PC-9 (cell line): ENCODE measurements at regions of chr5 and their contacts with region 1.

Region 1: DNA sequence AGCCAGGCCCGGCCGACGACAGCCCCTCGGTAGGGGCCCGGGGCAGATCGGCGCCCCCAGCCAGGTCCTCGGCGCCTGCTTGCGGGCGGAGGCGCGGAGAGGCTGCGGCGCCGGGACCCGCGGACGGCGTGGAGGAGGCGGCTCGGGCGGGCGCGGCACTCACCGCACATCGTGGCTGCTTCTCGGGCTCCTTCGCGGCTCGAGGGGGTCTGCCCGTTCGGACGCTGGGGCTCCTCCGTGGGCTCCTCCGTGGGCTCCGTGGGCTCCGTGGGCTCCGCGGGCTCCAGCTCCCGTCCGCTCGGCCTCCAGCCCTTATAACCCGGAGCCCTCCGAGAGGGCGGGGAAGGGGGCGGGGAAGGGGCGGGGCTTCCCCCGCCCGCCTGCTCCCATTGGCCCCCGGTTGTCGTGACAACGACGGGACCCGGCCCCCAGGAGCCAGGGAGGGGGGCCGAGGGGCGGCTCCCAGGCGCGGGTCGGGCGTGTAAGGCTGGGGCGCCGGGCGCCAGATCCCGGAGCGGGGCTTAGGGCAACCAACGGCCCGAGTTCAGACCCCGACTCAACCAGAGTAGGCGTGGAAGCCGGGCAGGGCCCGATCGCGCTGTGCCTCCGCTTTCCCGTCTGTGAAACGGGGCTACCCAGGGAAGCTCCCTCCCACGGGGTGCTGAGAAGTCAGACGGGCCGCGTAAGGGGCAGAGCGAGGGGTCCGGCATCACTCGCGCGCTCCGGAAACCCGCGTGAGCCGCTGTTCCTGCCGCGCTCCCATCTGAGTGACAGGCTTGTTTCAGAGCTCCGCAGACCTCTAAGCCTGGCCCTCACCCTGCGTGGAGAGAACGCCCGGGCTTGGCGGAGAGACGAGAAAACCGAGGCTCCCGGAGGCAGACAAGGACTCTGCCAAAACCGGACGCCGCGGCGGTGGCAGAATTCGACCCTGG is at the start of gene GFPT2:
- DNase-seq: peak; percentile 58 to 86
- H3K4me3 ChIP-seq: peak within 1 kb of the TSS; percentile 88
- H3K27ac ChIP-seq: no peak within 1 kb of the TSS
- H3K4me1 ChIP-seq: no peaks in the 10 kb centered on the region; the same call in 1 of the 2 replicates
- H3K27me3 ChIP-seq: no peaks in the 10 kb centered on the region
- CTCF ChIP-seq: no peak
- total RNA-seq, gene GFPT2: 22.5 and 24.4 TPM in 2 replicates

Region 2: GRCh38 chr5:180315762-180316212 is 37.5 kb before region 1 on chr5:
- CTCF ChIA-PET with region 1: interaction called, 5 read pairs
- POLR2A ChIA-PET with region 1: no interaction called
- intact Hi-C with region 1: loop called (anchors 2 kb)
- DNase-seq: peak; percentile 43 to 73
- H3K4me3 ChIP-seq: no peak overlapping the region
- H3K27ac ChIP-seq: no peak overlapping the region
- H3K4me1 ChIP-seq: no peaks in the 10 kb centered on the region
- H3K27me3 ChIP-seq: no peaks in the 10 kb centered on the region
- CTCF ChIP-seq: peak; percentile 98

Region 3: DNA sequence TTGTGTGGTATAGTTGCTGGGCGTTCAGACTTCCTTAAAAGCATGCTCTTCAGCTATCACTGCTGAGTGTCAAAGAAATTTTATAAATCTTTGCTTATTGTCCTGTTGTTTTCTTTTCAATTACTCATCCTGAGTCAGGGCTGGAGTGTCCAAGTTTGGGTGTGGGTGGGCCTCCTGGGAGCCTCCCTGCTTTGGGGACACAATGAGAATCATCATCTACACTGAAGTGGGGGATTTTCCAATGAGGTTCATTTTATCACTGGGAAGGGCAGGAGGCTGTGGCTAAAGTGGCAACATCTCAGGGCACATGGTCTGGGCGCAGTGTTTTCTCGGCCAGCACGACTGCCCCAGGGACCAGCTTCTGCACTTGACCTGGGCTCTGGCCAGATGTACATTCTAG is 19.7 kb before region 1 on chr5:
- CTCF ChIA-PET with region 1: interaction called, 5 read pairs
- POLR2A ChIA-PET with region 1: interaction called, 6 read pairs
- intact Hi-C with region 1: loop called (anchors 1 kb)
- DNase-seq: peak; percentile 70 to 84
- H3K4me3 ChIP-seq: no peak overlapping the region
- H3K27ac ChIP-seq: peak overlapping the region; percentile 90
- H3K4me1 ChIP-seq: peaks cover 66% of the 10 kb centered on the region
- H3K27me3 ChIP-seq: no peaks in the 10 kb centered on the region
- CTCF ChIP-seq: no peak